ENCODE measurements at regions of chrX and their contacts with region 1.

Region 1: DNA sequence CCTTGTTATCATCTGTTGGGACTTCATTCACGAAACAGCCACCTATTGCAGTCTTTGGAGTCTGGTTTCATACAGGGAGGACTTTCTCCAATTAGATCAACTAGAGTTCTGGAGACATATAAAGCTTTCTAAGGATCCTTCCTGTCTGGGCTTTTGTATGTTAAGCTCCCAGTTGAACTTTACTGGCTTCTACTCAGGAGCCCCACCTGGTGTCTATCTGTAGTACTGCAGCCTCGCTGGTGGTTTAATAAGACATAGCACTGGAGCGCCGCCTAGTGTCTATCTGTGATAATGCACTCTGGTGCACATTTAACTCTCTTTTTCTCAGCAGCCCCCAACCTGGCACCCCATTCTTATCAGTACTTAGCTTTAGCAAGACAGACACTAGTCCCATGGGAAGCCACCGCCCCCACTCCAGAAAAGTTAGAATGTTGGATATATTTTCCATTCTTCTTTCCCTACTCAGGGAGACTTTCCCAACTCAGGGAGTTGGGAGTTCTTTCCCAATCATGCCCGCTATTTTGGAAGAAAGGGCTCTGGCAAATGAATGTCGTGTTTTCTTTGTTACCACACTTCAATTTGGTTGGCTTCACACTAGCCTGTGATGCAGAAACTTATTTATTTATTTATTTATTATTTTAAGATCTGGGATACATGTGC is 36.9 kb upstream of the SYTL4 start:
- DNase-seq: peak; percentile 63 to 75 (median 65)
- H3K4me3 ChIP-seq: no peak overlapping the region
- H3K4me3 Mint-ChIP-seq: no peak overlapping the region
- H3K27ac ChIP-seq: no peak overlapping the region
- H3K27ac Mint-ChIP-seq: no peak overlapping the region
- H3K4me1 ChIP-seq: no peaks in the 10 kb centered on the region
- H3K4me1 Mint-ChIP-seq: no peaks in the 10 kb centered on the region
- H3K27me3 ChIP-seq: no peaks in the 10 kb centered on the region
- H3K27me3 Mint-ChIP-seq: peaks cover 4 to 11% (median 6%) of the 10 kb centered on the region in 3 donors
- CTCF ChIP-seq: peak; percentile 96

Region 2: GRCh38 chrX:100512471-100512870 is 256.3 kb before region 1 on chrX:
- intact Hi-C with region 1: loop called in 1 of 2 experiments (anchors 5 kb)
- DNase-seq: no peak
- H3K4me3 ChIP-seq: no peak overlapping the region
- H3K4me3 Mint-ChIP-seq: no peak overlapping the region
- H3K27ac ChIP-seq: no peak overlapping the region
- H3K27ac Mint-ChIP-seq: no peak overlapping the region
- H3K4me1 ChIP-seq: no peaks in the 10 kb centered on the region
- H3K4me1 Mint-ChIP-seq: no peaks in the 10 kb centered on the region
- H3K27me3 ChIP-seq: no peaks in the 10 kb centered on the region
- H3K27me3 Mint-ChIP-seq: peaks cover 0 to 12% (median 2%) of the 10 kb centered on the region in 3 donors
- CTCF ChIP-seq: peak; percentile 68

Region 3: GRCh38 chrX:100685284-100685996 is 83.4 kb before region 1 on chrX:
- intact Hi-C with region 1: loop called in 1 of 2 experiments (anchors 5 kb)
- DNase-seq: peak; percentile 42 to 44 (median 42)
- H3K4me3 ChIP-seq: no peak overlapping the region
- H3K4me3 Mint-ChIP-seq: no peak overlapping the region
- H3K27ac ChIP-seq: no peak overlapping the region
- H3K27ac Mint-ChIP-seq: no peak overlapping the region
- H3K4me1 ChIP-seq: no peaks in the 10 kb centered on the region
- H3K4me1 Mint-ChIP-seq: peaks cover 3% of the 10 kb centered on the region
- H3K27me3 ChIP-seq: no peaks in the 10 kb centered on the region
- H3K27me3 Mint-ChIP-seq: peaks cover 0 to 16% (median 2%) of the 10 kb centered on the region in 3 donors
- CTCF ChIP-seq: peak; percentile 70

Measured in CD14-positive monocyte (primary cell).